Activated CD4-positive, alpha-beta T cell treated with anti-CD3 and anti-CD28 coated beads, Interleukin-2, amount 10 ng/mL, durations not matched to agents 24 days and 14 days (primary cell): ENCODE measurements at regions of chr1 and their contacts with region 1.

Region 1: DNA sequence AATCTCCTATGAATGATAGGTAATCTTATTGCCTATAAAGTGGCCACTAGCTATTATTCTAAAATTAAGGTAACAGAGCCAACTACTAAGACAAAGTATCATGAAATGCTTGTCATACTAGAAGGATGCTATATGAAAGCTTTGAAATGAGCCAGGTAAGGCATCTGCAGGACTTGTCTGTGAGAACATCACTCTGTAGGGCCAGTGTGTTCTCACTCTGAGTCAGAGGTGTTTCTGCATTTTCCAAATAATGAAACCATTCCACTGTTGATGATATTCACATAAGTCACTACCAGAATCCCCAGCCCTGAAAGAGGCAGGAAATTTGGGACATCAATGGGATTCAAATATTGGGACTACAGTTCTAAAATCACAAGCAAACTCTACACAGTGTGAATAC is 25.8 kb upstream of the GBP5 start:
- DNase-seq: peak; percentile 68
- H3K4me3 Mint-ChIP-seq: peak overlapping the region; percentile 28
- H3K27ac Mint-ChIP-seq: peak overlapping the region; percentile 61
- H3K4me1 Mint-ChIP-seq: peaks cover 57% of the 10 kb centered on the region
- H3K27me3 Mint-ChIP-seq: no peaks in the 10 kb centered on the region

Region 2: DNA sequence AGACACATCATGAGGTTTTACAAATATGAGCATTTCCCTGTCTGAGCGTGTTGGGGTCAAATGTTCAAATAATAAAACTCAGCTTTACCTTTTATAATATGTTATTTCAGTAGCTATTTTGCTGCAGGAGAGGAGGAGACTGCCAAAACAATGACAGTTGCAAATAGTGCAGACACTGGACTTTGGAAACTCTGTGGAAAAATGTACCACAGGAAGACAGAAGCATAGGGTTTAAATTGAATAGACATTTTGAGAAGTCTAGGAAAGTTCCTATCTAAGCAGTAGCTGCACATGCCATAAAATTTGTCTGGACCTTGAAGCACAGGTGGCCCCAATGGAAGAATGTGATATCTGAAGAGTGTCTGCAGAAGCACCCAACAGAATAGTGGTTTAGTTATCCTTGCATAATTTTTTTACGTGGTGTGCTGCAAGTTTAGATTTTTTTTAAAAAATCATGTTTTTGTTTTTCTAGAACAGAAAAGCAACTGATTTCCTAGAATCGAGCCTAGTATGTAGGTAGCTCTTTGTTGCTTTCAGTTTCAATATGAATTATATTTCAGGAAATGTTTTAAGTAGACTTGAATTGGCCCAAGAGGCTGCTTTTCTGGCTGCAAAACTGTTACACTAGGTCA is 11.8 kb before region 1 on chr1:
- intact Hi-C with region 1: loop called (anchors 1 kb)
- DNase-seq: peak; percentile 81
- H3K4me3 Mint-ChIP-seq: peak overlapping the region; percentile 72
- H3K27ac Mint-ChIP-seq: peak overlapping the region; percentile 90
- H3K4me1 Mint-ChIP-seq: peaks cover 67% of the 10 kb centered on the region
- H3K27me3 Mint-ChIP-seq: no peaks in the 10 kb centered on the region

Region 3: GRCh38 chr1:89310505-89310904 is 12.0 kb after region 1 on chr1:
- intact Hi-C with region 1: loop called (anchors 1 kb)
- DNase-seq: peak; percentile 64
- H3K4me3 Mint-ChIP-seq: peak overlapping the region; percentile 70
- H3K27ac Mint-ChIP-seq: peak overlapping the region; percentile 92
- H3K4me1 Mint-ChIP-seq: peaks cover 46% of the 10 kb centered on the region
- H3K27me3 Mint-ChIP-seq: no peaks in the 10 kb centered on the region

Region 4: GRCh38 chr1:89598450-89599331 is 300.2 kb after region 1 on chr1:
- intact Hi-C with region 1: no loop called
- DNase-seq: peak; percentile 69
- H3K4me3 Mint-ChIP-seq: no peak overlapping the region
- H3K27ac Mint-ChIP-seq: peak overlapping the region; percentile 76
- H3K4me1 Mint-ChIP-seq: peaks cover 70% of the 10 kb centered on the region
- H3K27me3 Mint-ChIP-seq: no peaks in the 10 kb centered on the region